ENCODE measurements at regions of chr11 and their contacts with region 1.

Region 1: DNA sequence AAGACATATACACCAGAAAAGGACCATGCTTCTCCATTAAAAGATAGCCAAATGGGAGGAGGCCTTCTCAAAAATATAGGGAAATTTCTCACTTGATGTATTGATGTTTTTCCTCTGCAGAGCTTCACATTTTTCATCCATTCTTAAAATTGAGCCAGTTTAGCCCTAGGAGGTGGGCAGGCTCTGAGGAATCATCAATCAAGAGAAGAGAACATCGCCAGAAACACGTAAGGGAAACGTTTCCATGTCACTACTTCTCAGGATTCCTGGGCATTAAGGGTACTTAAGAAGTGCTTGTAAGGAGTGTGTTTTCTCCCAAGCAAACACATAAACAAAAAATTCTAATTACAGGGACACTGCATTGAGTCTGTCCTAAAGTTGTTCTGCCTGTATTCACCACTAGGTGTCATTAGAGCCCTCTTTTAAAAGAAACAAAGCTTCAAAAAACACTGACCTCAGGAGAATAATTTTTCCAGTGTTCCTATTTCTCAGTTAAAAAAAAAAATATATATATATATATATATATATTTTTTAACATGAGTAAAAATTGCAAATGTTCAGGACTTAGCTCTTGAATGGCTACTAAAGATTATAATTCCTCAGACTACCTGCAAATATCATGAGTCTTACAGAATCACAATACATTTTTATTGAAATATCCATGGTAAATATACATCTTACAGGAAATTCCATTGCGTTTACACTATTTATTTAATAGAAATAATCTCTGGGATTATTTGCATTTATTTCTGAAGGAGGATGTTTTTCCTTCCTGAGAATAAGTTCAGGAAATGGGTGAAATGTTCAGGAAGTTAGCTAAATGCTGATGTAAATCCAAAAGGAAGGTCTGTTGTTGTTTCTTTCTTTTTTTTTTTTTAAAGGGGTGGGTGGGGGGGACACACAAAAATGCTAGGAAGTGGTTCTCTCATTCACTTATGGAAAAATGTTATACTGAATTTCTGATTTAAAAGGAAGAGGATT is 16.0 kb downstream of the FZD4 start:
- DNase-seq: no peak
- ATAC-seq: peak in 1 of 2 donors; percentile 19

Region 2: DNA sequence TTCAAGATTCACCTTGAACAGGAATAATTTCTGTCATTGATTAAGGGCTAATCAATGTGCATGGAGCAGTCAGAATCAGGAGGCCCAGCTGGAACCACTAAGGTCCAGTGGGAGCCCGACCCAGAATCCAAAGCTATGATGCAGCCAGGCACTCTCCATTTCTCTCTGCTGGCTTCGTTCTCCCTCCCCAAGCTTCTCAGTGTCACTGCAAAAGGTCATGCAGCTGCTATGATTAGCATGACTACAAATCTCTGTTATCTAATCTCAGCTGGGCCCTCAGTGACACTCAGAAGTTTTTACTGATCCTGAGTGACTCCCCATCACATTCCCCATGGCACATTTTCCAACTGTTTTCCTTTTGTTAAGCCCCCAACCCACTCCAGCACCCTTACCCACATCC is 170.0 kb before region 1 on chr11:
- intact Hi-C with region 1: no loop called
- DNase-seq: no peak
- ATAC-seq: peak; percentile 56 to 59

Region 3: DNA sequence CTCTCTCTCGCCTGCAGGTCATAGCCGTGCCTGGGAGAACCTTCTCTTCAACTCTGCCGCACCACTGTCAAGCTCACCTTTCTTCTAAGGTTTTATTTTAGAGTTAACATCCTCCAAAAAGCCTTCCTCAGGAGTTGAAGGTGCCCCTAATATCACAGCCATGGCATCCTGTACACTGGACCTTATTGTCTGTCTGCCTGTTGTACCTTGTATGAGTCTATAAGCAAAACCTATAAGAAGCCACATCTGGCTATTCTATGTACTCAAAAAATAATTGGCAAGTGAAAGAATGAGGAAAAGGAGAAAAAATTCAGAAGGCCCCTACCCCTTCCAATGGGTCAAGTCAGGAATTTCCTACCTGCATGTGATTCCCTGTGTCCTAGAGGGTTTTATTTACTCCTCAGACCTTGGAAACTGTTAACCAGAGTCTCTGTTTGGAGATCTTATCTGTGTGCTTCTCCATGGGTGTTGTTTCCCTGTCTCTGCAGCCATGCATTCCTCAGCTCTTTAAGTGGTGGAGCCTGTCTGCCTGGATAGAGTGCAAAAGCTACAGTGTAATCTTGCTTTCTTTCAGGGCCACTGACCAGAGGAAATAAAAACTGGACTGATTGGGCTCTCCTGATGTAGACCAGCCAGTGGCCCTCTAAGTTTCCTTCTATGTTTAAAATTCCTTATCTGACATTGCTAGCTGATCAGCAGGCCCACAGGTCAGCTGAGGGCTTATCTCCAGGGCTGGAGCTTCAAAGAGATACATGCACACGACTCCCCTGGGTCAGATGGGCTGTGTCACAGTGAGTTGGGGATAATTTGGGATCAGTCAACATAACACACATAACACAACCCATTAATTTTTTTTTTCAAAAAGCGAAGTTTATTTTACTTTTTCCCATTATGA is 60.9 kb after region 1 on chr11:
- intact Hi-C with region 1: no loop called
- DNase-seq: no peak
- ATAC-seq: peak; percentile 70 to 86

Region 4: DNA sequence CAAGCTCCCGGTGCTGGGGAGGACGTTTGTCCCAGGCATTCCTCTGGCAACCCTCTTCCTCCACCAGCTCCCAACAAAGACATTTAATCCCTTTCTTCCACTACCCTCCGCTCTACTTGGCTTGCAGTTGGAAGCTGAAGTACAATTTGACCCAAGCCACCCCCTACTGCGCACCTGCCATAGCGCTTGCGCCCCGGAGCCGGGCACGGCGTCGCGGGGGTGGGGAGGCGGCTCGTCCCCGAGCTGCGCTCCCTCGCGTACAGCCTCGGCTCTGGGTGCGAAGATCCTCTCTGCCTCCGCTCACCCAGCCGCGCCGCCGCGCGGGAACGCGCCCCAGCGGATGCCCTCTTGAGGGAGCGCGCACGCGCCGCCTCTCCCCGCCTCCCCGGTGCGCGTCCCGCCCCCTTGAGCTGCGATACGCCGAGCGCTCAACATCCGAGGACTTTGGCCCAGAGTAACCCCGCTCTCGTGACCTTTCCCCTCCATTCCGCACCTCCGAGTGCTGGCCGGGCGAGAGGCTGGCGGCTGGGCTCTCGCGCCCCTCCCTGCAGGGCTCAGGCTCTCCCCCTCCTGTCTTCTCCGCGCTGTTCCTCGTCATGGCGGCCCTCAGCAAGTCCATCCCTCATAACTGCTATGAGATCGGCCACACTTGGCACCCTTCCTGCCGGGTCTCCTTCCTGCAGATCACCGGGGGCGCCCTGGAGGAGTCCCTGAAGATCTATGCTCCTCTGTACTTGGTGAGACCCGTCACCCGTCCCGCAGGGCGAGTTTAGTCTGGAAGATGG is 98.5 kb after region 1 on chr11 and contains the start of gene TMEM135:
- intact Hi-C with region 1: loop called in 1 of 2 experiments (anchors 10 kb)
- DNase-seq: peak; percentile 95
- ATAC-seq: peak; percentile 98 to 99
- total RNA-seq, gene TMEM135: 23.1 to 30.8 TPM

Region 5: DNA sequence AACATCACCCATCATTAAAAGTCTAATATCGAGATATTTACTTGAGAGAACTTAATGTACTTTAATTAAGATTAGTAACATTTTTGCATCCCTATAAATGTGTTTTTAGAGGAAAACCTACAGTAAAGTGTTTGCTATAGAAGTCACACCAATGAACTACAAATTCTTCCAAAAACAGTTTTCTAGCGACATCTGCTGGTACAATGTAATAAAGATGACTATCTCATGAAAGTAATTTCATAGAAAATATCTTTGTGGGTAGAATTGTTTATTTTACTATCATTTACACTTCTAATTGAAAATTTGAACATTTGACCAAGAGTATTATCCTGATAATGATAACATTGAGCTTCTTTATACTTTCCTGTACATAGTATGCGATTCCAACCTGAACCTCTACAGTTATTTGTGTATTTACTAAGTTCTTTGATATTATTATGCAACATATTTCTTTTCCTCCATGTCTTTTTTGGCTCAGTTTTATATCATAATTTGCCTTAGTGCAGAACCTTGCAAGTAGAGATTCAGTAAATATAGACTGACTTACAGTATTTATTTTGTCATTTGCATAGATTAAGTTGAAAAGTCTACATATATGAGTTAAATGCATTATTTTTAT is 351.2 kb after region 1 on chr11:
- intact Hi-C with region 1: loop called (anchors 2 to 5 kb)
- DNase-seq: no peak
- ATAC-seq: peak in 1 of 2 donors; percentile 32

Region 6: DNA sequence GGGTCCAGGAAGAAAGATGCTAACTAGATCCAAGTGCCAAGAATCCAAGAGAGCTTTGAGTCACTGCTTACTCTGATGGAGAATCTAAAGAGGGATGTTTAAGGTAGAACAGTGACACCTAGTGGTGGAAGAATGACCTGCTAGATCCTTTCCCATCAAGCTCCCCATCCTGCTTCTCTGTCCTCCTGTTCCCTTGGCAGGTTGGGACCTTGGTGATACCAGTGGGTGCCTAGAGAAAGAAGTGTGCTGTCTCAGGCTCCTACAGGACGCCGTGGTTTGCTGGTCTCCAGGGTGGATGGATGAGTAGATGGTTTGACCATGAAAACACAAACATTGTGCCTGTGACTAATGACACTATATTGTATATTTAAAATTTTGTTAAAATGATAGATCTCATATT is 482.2 kb after region 1 on chr11:
- intact Hi-C with region 1: loop called in 1 of 2 experiments (anchors 10 kb)
- DNase-seq: no peak
- ATAC-seq: peak; percentile 83 to 86